CD14-positive monocyte (primary cell): ENCODE measurements at regions of chr5 and their contacts with region 1.

Region 1: DNA sequence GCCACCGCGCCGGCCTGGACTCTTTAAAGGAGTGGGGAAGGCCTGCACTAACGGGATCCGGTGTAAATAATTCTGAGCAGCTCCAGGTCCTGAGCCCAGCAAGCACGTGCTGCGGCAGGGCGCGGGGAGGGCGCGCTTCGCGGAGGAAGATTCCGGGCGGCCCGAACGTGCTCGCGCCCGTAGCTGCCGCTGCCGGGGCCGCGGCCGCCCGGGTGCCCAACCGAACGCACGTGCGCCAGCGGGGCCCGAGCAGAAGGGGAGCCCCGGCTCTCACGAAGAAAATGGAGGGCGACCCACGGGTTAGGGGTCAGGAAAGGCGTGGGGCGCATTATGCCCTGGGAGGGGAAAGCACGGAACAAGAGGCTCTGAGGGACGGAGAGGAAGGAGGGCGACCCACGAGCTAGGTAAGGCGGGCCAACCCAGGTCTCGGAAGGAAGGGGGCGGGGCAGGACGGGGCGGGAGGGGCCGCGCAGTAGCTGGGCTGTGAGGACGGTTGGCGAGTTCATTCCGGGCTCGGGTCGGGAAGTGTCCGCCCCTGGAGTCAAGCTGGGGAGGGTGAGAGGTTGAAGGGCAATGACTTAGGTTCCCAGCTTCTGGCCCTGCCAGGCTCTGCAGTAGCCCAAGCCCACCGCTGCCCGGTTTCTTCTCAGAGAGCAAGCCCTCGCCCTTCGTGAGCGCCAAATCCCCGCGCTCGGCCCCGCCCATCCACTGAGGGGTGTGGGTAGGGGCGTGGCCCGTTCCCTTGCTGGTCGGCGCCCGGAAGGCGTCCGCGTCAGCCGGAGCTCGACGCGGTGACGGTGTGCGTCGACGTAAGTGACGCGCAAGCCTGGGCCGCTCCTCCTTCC is at the start of gene ZNF131:
- DNase-seq: peak; percentile 95 to 98 (median 96)
- H3K4me3 ChIP-seq: peak within 1 kb of the TSS; percentile 76 to 96 (median 89)
- H3K4me3 Mint-ChIP-seq: peak within 1 kb of the TSS; percentile 94 to 99
- H3K27ac ChIP-seq: peak within 1 kb of the TSS; percentile 95
- H3K27ac Mint-ChIP-seq: peak within 1 kb of the TSS; percentile 96 to 100 (median 98)
- H3K4me1 ChIP-seq: peaks cover 19 to 29% of the 10 kb centered on the region in 2 donors
- H3K4me1 Mint-ChIP-seq: peaks cover 24% of the 10 kb centered on the region
- H3K27me3 ChIP-seq: no peaks in the 10 kb centered on the region
- H3K27me3 Mint-ChIP-seq: peaks cover 0 to 3% (median 0%) of the 10 kb centered on the region in 3 donors
- CTCF ChIP-seq: no peak
- polyA plus RNA-seq, gene ZNF131: 13.4 to 18.8 (median 17.2) TPM

Region 2: GRCh38 chr5:41686767-41687166 is 1434.2 kb before region 1 on chr5:
- intact Hi-C with region 1: no loop called
- DNase-seq: no peak
- H3K4me3 ChIP-seq: no peak overlapping the region
- H3K4me3 Mint-ChIP-seq: no peak overlapping the region
- H3K27ac ChIP-seq: no peak overlapping the region
- H3K27ac Mint-ChIP-seq: no peak overlapping the region
- H3K4me1 ChIP-seq: no peaks in the 10 kb centered on the region
- H3K4me1 Mint-ChIP-seq: no peaks in the 10 kb centered on the region
- H3K27me3 ChIP-seq: no peaks in the 10 kb centered on the region
- H3K27me3 Mint-ChIP-seq: peaks cover 0 to 2% (median 0%) of the 10 kb centered on the region in 3 donors
- CTCF ChIP-seq: no peak

Region 3: DNA sequence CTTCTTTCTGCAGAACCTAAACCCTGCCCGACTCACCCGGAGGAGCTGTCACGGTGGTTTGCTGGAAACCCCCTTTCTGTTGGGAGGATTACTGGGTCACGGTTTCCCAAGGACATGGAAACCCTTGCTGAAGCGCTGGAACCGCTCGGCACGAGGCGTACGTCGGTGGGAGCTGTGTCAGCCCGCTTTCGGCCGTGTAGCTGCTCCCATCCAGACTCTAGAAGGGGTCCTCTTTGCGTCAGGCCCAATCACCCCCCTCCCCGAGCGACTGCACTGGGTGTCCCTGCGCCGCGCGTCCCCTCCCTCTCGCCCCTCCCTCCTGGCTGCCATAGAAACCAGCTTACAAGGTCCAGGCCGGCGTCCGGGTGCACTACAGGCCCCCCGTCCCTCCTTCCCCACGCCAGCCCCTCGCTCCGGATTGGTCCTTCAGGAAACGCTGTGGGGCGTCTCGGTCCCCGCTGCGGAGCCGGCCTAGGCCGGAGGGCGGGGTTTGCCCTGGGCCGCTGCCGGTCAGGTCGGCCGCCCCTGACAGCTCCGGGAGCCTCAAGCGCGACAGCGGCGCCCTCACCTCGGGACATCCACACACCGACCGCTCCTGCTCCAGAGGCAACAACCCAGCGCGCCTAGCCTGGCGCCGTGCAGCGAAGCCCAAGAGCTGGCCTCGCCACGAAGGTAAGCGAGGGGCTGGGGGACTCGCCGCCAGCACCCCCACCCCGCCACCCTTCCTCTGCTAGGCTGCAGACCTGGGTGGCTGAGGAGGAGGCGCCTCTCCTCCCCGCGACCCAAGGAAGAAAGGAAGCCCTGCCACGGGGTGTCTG is 71.0 kb after region 1 on chr5 and contains the start of gene NIM1K:
- intact Hi-C with region 1: loop called (anchors 5 to 10 kb)
- DNase-seq: peak; percentile 38 to 80 (median 52)
- H3K4me3 ChIP-seq: peak within 1 kb of the TSS; percentile 21 to 64 (median 25)
- H3K4me3 Mint-ChIP-seq: peak within 1 kb of the TSS; percentile 82 to 90
- H3K27ac ChIP-seq: peak within 1 kb of the TSS in 1 of 2 donors; percentile 40
- H3K27ac Mint-ChIP-seq: peak within 1 kb of the TSS; percentile 57 to 89 (median 84)
- H3K4me1 ChIP-seq: peaks cover 24 to 29% of the 10 kb centered on the region in 2 donors
- H3K4me1 Mint-ChIP-seq: peaks cover 28% of the 10 kb centered on the region
- H3K27me3 ChIP-seq: peaks cover 25 to 33% of the 10 kb centered on the region in 2 donors
- H3K27me3 Mint-ChIP-seq: peaks cover 35 to 47% (median 42%) of the 10 kb centered on the region in 3 donors
- CTCF ChIP-seq: no peak
- polyA plus RNA-seq, gene NIM1K: 0.13 TPM in 1 of 3 donors, not detected in the others